ENCODE measurements at regions of chr12 and their contacts with region 1.

Region 1: DNA sequence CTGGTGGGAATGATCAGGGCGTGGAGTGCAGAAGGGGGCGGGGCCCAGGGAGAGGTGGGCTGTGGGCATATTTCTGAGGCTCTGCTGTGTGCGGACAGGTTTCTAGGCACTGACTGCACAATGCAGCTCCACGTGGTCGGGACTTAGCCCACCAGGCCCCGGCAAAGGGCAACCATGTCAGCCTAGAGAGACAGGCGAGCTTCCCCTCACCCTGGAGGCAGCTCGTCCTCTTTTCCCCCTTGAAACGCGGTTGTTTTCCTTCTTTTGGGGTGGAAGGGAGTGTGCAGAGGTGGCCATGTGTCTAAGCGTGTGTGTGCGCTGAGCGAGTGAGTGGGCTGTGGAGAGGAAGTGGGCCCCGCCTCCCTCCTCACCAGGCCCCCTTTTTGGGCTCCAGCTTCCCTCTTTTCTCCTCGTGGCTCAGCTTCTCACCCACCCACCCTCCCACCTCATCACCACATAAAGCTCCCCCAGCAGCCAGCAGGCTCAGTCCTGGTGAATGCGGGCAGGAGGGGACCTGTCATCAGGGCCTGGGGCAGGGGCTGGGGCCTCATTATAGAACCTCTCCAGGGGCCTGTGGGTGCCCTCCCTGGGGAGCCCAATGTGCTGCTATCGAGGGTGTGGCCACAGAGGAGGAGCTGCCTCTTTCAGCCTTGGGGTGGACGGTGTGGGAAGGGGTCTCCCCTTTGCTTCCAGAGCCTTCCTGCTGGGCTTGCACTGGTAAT is 22.0 kb downstream of the LRTM2 start:
- H3K4me3 Mint-ChIP-seq: no peak overlapping the region
- H3K27ac Mint-ChIP-seq: peak overlapping the region; percentile 57
- H3K4me1 Mint-ChIP-seq: peaks cover 81% of the 10 kb centered on the region
- H3K27me3 Mint-ChIP-seq: peaks cover 12% of the 10 kb centered on the region

Region 2: DNA sequence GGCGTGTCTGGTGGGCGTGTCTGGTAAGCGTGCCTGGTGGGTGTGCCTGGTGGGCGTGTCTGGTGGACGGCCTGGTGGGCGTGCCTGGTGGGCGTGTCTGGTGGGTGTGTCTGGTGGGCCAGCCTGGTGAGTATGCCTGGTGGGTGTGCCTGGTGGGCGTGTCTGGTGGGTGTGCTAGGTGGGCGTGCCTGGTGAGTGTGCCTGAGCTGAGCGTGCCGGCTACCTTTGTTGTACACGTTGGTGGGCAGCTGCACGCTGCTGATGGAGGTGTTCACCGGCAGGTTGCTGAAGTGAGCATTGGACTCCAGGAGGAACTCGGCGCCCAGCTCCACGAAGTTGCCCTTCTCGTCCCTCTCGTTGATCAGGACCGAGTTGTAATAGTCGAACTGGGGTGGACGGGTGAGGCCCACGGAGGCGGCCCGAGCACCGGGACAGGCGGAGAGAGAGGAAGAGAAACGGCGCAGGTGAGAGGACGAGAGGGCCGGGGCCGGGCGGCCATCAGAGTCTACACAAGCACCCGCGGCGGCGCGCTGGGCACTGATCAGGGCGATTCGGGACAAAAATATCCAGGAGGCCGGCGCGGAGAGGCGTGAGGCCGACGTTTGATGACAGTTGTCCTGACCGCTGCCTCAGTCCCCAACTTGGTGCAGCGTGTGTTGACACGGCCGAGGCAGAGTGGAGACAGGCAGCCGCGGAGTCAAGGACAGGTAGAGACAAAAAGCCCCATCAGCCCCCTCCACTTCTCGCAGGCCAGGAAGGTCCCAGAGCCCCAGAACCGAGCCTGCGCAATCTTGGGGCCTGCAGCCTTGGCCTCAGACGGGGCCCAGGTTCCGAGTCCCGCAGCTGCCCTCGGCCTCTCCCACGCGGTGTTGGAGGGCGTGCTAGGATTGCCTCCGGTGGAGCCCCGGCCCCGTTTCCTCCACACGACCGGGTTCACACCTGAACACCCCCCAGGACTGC is 65.6 kb after region 1 on chr12:
- intact Hi-C with region 1: loop called (anchors 10 kb)
- H3K4me3 Mint-ChIP-seq: peak overlapping the region; percentile 60
- H3K27ac Mint-ChIP-seq: no peak overlapping the region
- H3K4me1 Mint-ChIP-seq: peaks cover 22% of the 10 kb centered on the region
- H3K27me3 Mint-ChIP-seq: peaks cover 32% of the 10 kb centered on the region

Measured in dendritic cell treated with granulocyte-macrophage colony-stimulating factor and Interleukin-4, amounts not matched to agents 40 ng/mL and 50 ng/mL, for 4 days (primary cell).